ENCODE measurements at regions of chr2 and their contacts with region 1.

Region 1: GRCh38 chr2:10079234-10079869 is 859 bp downstream of the CYS1 start:
- DNase-seq: no peak
- ATAC-seq: peak; percentile 41
- H3K4me3 Mint-ChIP-seq: peak overlapping the region; percentile 61
- H3K27ac Mint-ChIP-seq: no peak overlapping the region
- H3K4me1 Mint-ChIP-seq: peaks cover 11% of the 10 kb centered on the region
- H3K27me3 Mint-ChIP-seq: peaks cover 81% of the 10 kb centered on the region

Region 2: DNA sequence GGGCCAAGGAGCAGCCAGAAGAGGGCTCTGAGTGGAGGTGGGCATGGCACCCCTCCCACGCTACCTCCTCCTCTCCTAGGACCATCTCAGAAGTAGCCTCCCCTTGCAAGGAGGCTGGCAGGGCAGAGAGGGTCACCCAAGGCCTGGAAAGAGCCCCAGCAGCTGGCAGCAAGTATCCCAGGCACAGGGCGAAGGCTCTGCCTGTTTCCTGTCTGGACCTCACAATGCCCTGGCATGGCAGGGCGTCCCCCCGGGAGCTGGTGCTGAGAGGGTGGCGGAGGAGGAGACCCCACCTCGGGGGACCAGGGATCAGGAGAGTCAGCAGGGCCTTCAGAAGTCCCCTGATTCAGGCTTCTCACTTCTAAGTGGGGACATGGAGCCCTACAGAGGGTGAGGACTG is 302.3 kb before region 1 on chr2:
- CTCF ChIA-PET with region 1: no interaction called
- DNase-seq: no peak
- ATAC-seq: no peak
- H3K4me3 Mint-ChIP-seq: no peak overlapping the region
- H3K27ac Mint-ChIP-seq: no peak overlapping the region
- H3K4me1 Mint-ChIP-seq: peaks cover 43% of the 10 kb centered on the region
- H3K27me3 Mint-ChIP-seq: no peaks in the 10 kb centered on the region

Region 3: DNA sequence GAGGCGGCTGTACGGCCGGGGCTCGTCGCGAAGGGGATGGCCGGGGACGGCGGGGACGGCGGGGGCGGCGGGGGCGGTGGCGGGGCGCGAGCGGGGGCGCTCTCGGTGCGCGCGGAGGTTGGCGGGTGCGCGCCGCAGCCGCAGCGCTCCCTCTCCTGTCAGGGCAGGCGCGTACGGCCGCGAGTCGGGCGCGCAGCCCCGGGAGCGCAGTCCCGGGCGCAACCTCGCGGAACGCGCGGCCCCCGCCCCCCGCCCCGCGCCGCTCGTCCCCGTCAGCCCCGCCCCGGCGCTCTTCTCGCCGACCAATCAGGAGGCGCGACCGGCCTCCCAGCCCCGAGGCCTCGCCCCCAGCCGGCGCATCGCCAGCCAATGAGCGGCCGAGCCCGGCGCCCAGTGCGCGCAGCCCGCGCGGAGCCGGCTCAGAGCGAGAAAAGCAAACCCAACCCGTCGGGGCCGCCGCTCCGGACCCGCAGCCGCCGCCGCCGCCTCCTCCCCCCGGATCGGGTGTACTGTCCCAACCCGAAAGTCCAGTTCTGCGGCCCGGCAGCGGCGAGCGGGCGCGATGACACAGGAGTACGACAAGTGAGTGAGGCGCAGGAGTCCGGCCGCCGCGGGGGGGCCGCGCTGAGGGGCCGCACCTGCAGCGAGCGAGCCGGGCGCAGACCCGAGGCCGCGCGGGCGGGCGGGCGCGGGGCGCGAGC is 127.9 kb before region 1 on chr2 and contains the start of gene GRHL1:
- CTCF ChIA-PET with region 1: no interaction called
- DNase-seq: peak; percentile 92
- ATAC-seq: peak; percentile 97
- H3K4me3 Mint-ChIP-seq: peak within 1 kb of the TSS; percentile 70
- H3K27ac Mint-ChIP-seq: no peak within 1 kb of the TSS
- H3K4me1 Mint-ChIP-seq: peaks cover 13% of the 10 kb centered on the region
- H3K27me3 Mint-ChIP-seq: peaks cover 68% of the 10 kb centered on the region
- total RNA-seq, gene GRHL1: 0.64 to 1.0 TPM

Region 4: DNA sequence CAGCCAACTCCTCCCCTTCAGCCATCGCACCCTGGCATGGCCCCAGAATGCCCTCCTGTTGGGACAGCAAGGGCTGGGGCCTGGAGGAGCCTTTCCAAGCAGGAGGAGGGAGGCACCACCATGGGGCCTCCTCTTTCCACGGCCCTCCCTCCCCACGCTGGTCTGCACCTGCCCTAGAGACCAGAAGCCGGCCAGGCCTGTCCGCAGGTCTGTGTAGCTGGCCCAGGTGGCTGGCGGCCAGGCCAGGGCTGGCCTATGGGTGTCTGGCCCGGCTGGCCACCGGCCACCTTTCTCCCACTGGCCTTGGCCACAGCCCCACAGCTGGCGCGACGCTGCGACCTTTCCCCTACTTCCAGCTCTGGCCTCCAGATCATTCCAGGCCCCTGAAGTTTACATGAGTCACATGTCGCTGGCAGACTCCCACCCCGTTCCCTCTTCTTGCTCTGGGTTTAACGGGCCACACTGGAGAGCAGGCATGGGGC is 69.5 kb before region 1 on chr2:
- CTCF ChIA-PET with region 1: no interaction called
- DNase-seq: no peak
- ATAC-seq: no peak
- H3K4me3 Mint-ChIP-seq: no peak overlapping the region
- H3K27ac Mint-ChIP-seq: no peak overlapping the region
- H3K4me1 Mint-ChIP-seq: no peaks in the 10 kb centered on the region
- H3K27me3 Mint-ChIP-seq: peaks cover 27% of the 10 kb centered on the region

Region 5: DNA sequence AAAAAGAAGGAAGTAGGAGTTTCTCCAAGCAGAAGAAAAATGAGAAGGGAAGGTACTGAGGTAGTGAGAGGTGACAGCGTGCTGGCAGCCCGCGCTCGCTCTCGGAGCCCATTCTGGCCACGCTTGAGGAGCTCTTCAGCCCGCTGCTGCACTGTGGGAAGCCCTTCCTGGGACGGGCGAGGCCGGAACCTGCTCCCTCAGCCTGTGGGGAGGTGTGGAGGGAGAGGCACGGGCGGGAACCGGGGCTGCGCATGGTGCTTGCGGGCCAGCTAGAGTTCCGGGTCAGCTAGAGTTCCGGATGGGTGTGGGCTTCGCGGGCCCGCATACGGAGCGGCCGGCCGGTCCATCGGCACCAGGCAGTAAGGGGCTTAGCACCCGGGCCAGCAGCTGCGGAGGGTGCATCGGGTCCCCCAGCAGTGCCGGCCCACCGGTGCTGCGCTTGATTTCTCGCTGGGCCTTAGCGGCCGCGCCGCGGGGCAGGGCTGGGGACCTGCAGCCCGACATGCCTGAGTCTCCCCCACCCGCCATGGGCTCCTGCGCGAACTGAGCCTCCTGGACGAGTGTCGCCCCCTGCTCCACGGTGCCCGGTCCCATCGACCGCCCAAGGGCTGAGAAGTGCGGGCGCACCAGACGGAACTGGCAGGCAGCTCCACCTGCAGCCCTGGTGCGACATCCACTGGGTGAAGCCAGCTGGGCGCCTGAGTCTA is 12.0 kb after region 1 on chr2:
- CTCF ChIA-PET with region 1: interaction called, 117 read pairs
- DNase-seq: peak; percentile 63
- ATAC-seq: peak; percentile 64
- H3K4me3 Mint-ChIP-seq: peak overlapping the region; percentile 50
- H3K27ac Mint-ChIP-seq: no peak overlapping the region
- H3K4me1 Mint-ChIP-seq: peaks cover 11% of the 10 kb centered on the region
- H3K27me3 Mint-ChIP-seq: peaks cover 71% of the 10 kb centered on the region

Region 6: GRCh38 chr2:10097352-10098148 is 18.2 kb after region 1 on chr2:
- CTCF ChIA-PET with region 1: interaction called, 117 read pairs
- DNase-seq: peak; percentile 52
- ATAC-seq: peak; percentile 82
- H3K4me3 Mint-ChIP-seq: no peak overlapping the region
- H3K27ac Mint-ChIP-seq: no peak overlapping the region
- H3K4me1 Mint-ChIP-seq: peaks cover 2% of the 10 kb centered on the region
- H3K27me3 Mint-ChIP-seq: peaks cover 37% of the 10 kb centered on the region

Measured in activated CD8-positive, alpha-beta memory T cell treated with anti-CD3 and anti-CD28 coated beads, Interleukin-2, amount 10 ng/mL, durations not matched to agents 7 days and 5 days (primary cell).